ENCODE measurements at regions of chr15 and their contacts with region 1.

Region 1: GRCh38 chr15:42065033-42065432 is 29.3 kb downstream of the PLA2G4D start:
- DNase-seq: peak in 1 of 9 donors; percentile 17
- ATAC-seq: no peak
- H3K4me3 ChIP-seq: no peak overlapping the region
- H3K4me3 Mint-ChIP-seq: no peak overlapping the region
- H3K27ac ChIP-seq: no peak overlapping the region
- H3K27ac Mint-ChIP-seq: peak overlapping the region in 1 of 9 donors; percentile 56
- H3K4me1 ChIP-seq: no peaks in the 10 kb centered on the region
- H3K4me1 Mint-ChIP-seq: peaks cover 0 to 9% (median 7%) of the 10 kb centered on the region in 7 donors
- H3K27me3 ChIP-seq: no peaks in the 10 kb centered on the region
- H3K27me3 Mint-ChIP-seq: peaks cover 11 to 28% (median 22%) of the 10 kb centered on the region in 5 donors

Region 2: DNA sequence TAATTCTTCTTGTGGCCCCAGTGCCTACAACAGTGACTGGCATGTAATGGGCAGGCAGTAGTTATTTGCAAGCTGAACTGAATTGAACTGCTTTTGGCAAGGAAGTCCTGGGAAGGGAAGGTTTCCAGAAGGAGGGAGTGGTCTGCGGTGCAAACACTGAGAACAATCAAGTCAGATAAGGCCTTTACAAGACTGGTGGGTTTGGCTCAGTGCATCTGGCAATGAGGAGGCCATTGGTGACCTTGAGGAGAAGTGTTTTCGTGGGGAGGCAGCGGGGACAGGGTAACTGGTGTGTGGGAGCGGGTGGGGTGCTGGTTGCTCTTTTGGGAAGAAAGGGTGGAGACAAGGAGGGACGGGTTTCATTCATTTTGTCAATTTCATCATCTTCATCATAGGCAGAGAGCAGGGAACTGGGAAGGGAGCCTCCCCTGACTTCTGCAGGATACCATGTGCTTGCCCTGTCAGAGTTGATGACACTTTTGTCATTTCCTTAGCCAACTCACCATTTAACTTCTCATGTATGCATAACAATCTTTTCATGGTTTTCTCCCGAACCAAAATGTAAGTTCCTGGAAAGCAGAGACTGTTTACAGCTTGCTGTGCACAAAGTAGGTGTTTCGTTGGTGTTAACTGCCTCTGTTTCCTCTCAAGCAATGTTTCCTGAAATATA is 84.2 kb before region 1 on chr15:
- CTCF ChIA-PET with region 1: no interaction called
- POLR2A ChIA-PET with region 1: no interaction called
- intact Hi-C with region 1: no loop called
- DNase-seq: no peak
- ATAC-seq: no peak
- H3K4me3 ChIP-seq: no peak overlapping the region
- H3K4me3 Mint-ChIP-seq: peak overlapping the region in 1 of 10 donors; percentile 61
- H3K27ac ChIP-seq: no peak overlapping the region
- H3K27ac Mint-ChIP-seq: peak overlapping the region in 3 of 9 donors; percentile 28 to 88 (median 64)
- H3K4me1 ChIP-seq: no peaks in the 10 kb centered on the region
- H3K4me1 Mint-ChIP-seq: peaks cover 0 to 40% (median 0%) of the 10 kb centered on the region in 7 donors
- H3K27me3 ChIP-seq: no peaks in the 10 kb centered on the region
- H3K27me3 Mint-ChIP-seq: peaks cover 0 to 10% (median 3%) of the 10 kb centered on the region in 5 donors

Region 3: DNA sequence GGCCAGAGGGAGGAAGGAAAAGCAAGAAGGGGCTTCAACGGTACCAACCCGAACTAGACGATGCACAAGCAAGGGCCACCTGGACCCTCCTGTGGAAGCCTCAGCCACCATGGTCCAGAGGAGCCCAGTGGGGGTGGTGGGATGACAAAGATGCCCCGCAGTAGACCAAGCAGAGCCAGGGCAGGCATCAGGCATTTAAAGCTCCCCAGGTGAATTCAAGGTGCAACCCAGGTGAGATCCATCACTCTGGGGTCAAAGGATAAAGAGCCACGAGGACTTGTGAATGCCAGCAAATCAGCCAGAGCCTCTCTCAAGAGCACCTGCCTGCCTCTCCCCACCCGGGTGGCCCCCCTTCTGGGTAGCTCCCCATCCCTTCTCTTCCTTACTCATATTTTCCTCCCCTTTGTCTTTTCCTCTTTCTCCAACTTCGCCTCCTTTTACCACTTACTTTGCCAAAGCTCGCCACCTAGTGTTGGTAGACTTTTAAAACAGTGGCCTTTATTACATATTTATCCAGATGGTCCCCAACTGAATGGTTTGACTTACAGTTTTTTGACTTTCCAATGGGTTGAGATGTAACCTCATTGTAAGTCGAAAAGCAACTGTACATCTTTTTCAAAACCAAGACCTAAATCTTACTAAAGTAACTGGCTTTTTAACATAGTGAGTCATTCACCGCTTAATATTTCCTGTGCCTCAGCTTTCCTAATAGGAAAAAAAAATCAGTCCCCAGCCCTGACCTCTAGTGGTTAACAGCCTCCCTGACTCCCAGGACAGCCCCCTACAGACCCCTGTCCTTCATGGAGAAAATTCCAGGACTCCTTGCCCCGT is 72.6 kb after region 1 on chr15:
- CTCF ChIA-PET with region 1: no interaction called
- POLR2A ChIA-PET with region 1: no interaction called
- intact Hi-C with region 1: loop called in 1 of 2 experiments (anchors 1 kb)
- DNase-seq: peak in 4 of 9 donors; percentile 8 to 12 (median 9)
- ATAC-seq: no peak
- H3K4me3 ChIP-seq: no peak overlapping the region
- H3K4me3 Mint-ChIP-seq: no peak overlapping the region
- H3K27ac ChIP-seq: no peak overlapping the region
- H3K27ac Mint-ChIP-seq: no peak overlapping the region
- H3K4me1 ChIP-seq: no peaks in the 10 kb centered on the region
- H3K4me1 Mint-ChIP-seq: peaks cover 0 to 7% (median 0%) of the 10 kb centered on the region in 7 donors
- H3K27me3 ChIP-seq: no peaks in the 10 kb centered on the region
- H3K27me3 Mint-ChIP-seq: peaks cover 0 to 6% (median 3%) of the 10 kb centered on the region in 5 donors

Region 4: DNA sequence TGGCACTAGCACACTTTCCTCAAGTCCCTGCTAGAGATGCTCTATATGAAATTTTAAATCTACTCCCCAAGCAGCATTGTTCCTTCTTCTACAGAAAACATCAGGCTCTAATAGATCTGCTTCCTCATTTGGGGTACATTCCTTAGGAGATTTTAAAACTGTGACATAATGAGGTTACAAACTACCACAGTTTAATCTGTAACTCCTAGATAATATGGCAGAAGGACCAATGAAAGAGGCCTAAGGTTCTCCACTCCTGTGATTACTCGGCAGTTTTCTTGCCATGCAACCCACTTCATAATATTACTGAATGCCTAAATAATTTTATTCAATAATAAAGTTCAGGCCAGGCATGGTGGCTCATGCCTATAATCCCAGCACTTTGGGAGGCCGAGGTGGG is 409.8 kb after region 1 on chr15:
- CTCF ChIA-PET with region 1: no interaction called
- POLR2A ChIA-PET with region 1: no interaction called
- intact Hi-C with region 1: loop called in 1 of 2 experiments (anchors 5 kb)
- DNase-seq: no peak
- ATAC-seq: no peak
- H3K4me3 ChIP-seq: no peak overlapping the region
- H3K4me3 Mint-ChIP-seq: no peak overlapping the region
- H3K27ac ChIP-seq: no peak overlapping the region
- H3K27ac Mint-ChIP-seq: peak overlapping the region in 7 of 9 donors; percentile 13 to 76 (median 54)
- H3K4me1 ChIP-seq: no peaks in the 10 kb centered on the region
- H3K4me1 Mint-ChIP-seq: peaks cover 8 to 44% (median 16%) of the 10 kb centered on the region in 7 donors
- H3K27me3 ChIP-seq: no peaks in the 10 kb centered on the region
- H3K27me3 Mint-ChIP-seq: no peaks in the 10 kb centered on the region

Measured in naive thymus-derived CD4-positive, alpha-beta T cell (primary cell).